H1 (cell line): ENCODE measurements at regions of chr2 and their contacts with region 1.

Region 1: DNA sequence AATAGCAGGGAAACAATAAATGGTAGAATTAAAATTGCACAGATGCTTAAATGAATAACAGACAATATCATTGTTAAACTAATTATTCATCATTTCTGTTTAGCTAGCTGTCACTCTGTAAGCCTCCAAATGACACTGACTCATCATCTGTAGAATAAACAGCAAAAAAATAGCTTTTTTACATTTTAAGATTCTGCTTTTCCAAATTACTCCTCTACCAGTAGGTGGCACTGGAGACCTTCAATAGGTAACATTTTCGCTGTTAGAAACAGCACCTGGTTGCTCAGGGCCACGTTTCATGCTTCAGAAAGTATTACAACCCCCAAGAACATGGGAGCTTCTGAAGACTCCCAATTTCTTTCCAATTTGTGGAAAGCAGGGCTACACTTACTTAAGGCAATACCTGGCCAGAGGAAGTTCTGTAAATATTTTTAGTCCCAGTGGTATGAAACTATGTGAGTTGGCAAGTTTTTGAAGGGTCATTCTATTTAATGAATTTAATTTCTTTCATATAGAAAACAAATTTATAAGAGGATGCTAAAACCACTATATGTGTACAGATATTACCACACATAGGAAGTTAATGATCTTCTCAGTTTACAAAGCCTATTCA is 45.4 kb downstream of the TTN start:
- DNase-seq: peak in 1 of 2 experiments; percentile 3
- H3K4me3 ChIP-seq: no peak overlapping the region
- H3K27ac ChIP-seq: no peak overlapping the region
- H3K4me1 ChIP-seq: no peaks in the 10 kb centered on the region
- H3K27me3 ChIP-seq: no peaks in the 10 kb centered on the region
- CTCF ChIP-seq: peak in 2 of 3 experiments; percentile 68 to 70; a peak in 3 of 4 replicates
- EP300 ChIP-seq: no peak
- POLR2A ChIP-seq: no peak
- RAD21 ChIP-seq: peak; percentile 88 to 89

Region 2: GRCh38 chr2:178750263-178750662 is 11.6 kb before region 1 on chr2:
- CTCF ChIA-PET with region 1: interaction called, 15 read pairs
- POLR2A ChIA-PET with region 1: no interaction called
- DNase-seq: no peak
- H3K4me3 ChIP-seq: no peak overlapping the region
- H3K27ac ChIP-seq: no peak overlapping the region
- H3K4me1 ChIP-seq: no peaks in the 10 kb centered on the region
- H3K27me3 ChIP-seq: no peaks in the 10 kb centered on the region
- CTCF ChIP-seq: no peak
- EP300 ChIP-seq: no peak
- POLR2A ChIP-seq: no peak
- RAD21 ChIP-seq: no peak

Region 3: GRCh38 chr2:178775975-178776374 is 14.1 kb after region 1 on chr2:
- CTCF ChIA-PET with region 1: interaction called, 11 read pairs
- POLR2A ChIA-PET with region 1: no interaction called
- DNase-seq: no peak
- H3K4me3 ChIP-seq: no peak overlapping the region
- H3K27ac ChIP-seq: no peak overlapping the region
- H3K4me1 ChIP-seq: no peaks in the 10 kb centered on the region
- H3K27me3 ChIP-seq: no peaks in the 10 kb centered on the region
- CTCF ChIP-seq: no peak
- EP300 ChIP-seq: no peak
- POLR2A ChIP-seq: no peak
- RAD21 ChIP-seq: no peak